Activated CD8-positive, alpha-beta T cell treated with anti-CD3 and anti-CD28 coated beads, Interleukin-2, amount 10 ng/mL, durations not matched to agents 7 days and 5 days (primary cell): ENCODE measurements at regions of chr10 and their contacts with region 1.

Region 1: GRCh38 chr10:11515596-11516430 is 95.6 kb downstream of the USP6NL start:
- DNase-seq: peak; percentile 69
- ATAC-seq: peak; percentile 77
- H3K4me3 Mint-ChIP-seq: no peak overlapping the region
- H3K27ac Mint-ChIP-seq: no peak overlapping the region
- H3K4me1 Mint-ChIP-seq: peaks cover 17% of the 10 kb centered on the region
- H3K27me3 Mint-ChIP-seq: peaks cover 10% of the 10 kb centered on the region

Region 2: GRCh38 chr10:11505639-11506038 is 10.2 kb before region 1 on chr10:
- CTCF ChIA-PET with region 1: interaction called, 15 read pairs
- POLR2A ChIA-PET with region 1: no interaction called
- DNase-seq: no peak
- ATAC-seq: no peak
- H3K4me3 Mint-ChIP-seq: no peak overlapping the region
- H3K27ac Mint-ChIP-seq: no peak overlapping the region
- H3K4me1 Mint-ChIP-seq: peaks cover under 1% of the 10 kb centered on the region
- H3K27me3 Mint-ChIP-seq: peaks cover 2% of the 10 kb centered on the region

Region 3: DNA sequence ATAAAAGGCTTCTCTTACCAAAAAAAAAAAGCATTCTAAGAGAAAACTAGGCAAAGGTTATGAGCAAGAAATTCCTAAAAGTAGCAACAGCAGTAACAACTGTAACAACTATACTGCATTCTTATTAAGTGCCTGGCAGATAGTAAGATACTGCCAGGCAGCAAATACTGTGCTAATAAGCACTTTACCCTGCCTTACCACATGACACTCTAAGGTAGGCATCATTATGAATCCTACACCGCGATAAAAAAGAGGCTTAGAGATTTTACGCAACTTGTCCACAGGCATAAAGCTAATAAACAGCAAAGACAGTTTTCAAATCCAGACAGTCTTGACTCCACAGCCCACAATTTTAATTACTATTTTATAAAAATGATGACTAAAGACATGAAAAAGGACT is 12.5 kb after region 1 on chr10:
- CTCF ChIA-PET with region 1: interaction called, 12 read pairs
- POLR2A ChIA-PET with region 1: no interaction called
- DNase-seq: no peak
- ATAC-seq: peak; percentile 51
- H3K4me3 Mint-ChIP-seq: peak overlapping the region; percentile 67
- H3K27ac Mint-ChIP-seq: no peak overlapping the region
- H3K4me1 Mint-ChIP-seq: peaks cover 27% of the 10 kb centered on the region
- H3K27me3 Mint-ChIP-seq: no peaks in the 10 kb centered on the region

Region 4: DNA sequence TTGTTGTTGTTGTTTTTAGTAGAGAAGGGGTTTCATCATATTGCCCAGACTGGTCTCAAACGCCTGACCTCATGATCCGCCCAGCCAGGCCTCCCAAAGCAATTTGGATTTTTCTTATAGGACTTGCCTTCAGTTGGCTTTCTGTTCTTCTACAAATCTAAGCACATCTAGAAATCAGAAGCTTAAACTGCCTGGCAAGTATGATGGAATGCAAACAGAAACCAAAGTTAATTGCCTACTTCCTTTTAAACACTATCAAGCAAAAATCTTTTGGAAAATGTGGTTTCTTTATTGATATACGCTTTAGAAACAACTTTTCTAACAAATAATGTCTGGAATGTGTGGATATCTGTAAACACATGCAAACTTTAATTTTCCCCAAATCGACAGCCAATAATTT is 30.8 kb after region 1 on chr10:
- CTCF ChIA-PET with region 1: no interaction called
- POLR2A ChIA-PET with region 1: no interaction called
- DNase-seq: no peak
- ATAC-seq: no peak
- H3K4me3 Mint-ChIP-seq: no peak overlapping the region
- H3K27ac Mint-ChIP-seq: no peak overlapping the region
- H3K4me1 Mint-ChIP-seq: peaks cover 3% of the 10 kb centered on the region
- H3K27me3 Mint-ChIP-seq: no peaks in the 10 kb centered on the region

Region 5: GRCh38 chr10:11724938-11725776 is 209.3 kb after region 1 on chr10:
- CTCF ChIA-PET with region 1: interaction called, 25 read pairs
- POLR2A ChIA-PET with region 1: no interaction called
- DNase-seq: peak; percentile 33
- ATAC-seq: peak; percentile 60
- H3K4me3 Mint-ChIP-seq: no peak overlapping the region
- H3K27ac Mint-ChIP-seq: no peak overlapping the region
- H3K4me1 Mint-ChIP-seq: peaks cover 4% of the 10 kb centered on the region
- H3K27me3 Mint-ChIP-seq: peaks cover 35% of the 10 kb centered on the region